ENCODE measurements at regions of chr22 and their contacts with region 1.

Region 1: DNA sequence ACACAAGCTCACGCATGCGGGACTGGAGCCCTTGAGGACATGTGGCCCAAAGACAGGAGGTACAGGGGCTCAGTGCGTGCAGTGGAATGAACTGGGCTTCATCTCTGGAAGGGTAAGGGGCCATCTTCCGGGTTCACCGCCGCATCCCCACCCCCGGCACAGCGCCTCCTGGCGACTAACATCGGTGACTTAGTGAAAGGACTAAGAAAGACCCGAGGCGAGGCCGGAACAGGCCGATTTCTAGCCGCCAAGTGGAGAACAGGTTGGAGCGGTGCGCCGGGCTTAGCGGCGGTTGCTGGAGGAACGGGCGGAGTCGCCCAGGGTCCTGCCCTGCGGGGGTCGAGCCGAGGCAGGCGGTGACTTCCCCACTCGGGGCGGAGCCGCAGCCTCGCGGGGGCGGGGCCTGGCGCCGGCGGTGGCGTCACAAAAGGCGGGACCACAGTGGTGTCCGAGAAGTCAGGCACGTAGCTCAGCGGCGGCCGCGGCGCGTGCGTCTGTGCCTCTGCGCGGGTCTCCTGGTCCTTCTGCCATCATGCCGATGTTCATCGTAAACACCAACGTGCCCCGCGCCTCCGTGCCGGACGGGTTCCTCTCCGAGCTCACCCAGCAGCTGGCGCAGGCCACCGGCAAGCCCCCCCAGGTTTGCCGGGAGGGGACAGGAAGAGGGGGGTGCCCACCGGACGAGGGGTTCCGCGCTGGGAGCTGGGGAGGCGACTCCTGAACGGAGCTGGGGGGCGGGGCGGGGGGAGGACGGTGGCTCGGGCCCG is at the start of gene MIF:
- DNase-seq: peak; percentile 96
- ATAC-seq: peak; percentile 91
- H3K4me3 Mint-ChIP-seq: peak within 1 kb of the TSS; percentile 94
- H3K27ac Mint-ChIP-seq: peak within 1 kb of the TSS; percentile 99
- H3K4me1 Mint-ChIP-seq: peaks cover 21% of the 10 kb centered on the region
- H3K27me3 Mint-ChIP-seq: no peaks in the 10 kb centered on the region
- CTCF ChIP-seq: peak; percentile 85
- total RNA-seq, gene MIF: 1,485 to 1,525 TPM

Region 2: DNA sequence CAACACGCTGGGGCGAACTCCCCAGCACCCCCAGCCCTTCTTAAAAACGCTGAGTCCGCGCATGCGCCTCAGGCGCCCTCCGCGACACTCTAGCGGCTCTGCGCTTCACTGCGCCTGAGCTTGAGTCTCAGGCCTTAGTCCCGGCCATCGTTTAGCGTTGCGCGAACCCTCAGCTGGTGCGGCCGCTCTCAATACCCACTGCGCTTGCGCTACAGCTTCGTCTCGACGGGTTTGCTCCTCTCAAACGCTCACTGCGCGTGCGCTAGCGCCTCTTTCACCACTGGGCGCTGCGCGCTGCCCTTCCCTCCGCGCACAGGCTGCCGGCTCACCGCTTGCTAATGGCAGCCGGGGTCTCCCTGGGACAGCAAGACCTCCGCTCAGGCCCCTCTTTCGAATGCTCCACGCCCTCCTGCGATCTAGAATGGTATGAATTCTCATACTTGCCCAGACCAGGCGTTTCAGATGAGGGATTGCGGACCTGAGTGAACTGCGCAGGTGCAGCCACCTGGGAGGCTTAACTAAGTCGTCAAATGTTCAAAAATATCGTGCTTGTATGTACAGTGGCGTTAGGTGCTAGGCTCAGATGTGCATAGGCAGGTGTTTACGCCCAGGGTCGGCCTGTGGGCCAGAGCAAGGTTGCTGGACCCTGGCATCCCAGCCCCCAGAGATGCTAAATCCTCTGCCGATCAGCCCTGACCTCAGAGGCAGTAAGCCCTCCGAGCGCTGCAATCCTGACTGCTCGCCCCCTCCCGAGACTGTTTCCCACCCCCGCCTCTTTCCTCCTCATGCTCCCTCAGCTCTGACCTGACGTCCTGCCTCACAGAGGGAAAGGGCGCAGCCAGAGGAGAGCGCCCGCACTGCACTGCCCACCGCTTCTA is 36.3 kb before region 1 on chr22 and contains the start of gene SLC2A11:
- CTCF ChIA-PET with region 1: interaction called, 28 read pairs
- POLR2A ChIA-PET with region 1: interaction called, 10 read pairs
- intact Hi-C with region 1: no loop called
- DNase-seq: peak; percentile 97
- ATAC-seq: peak; percentile 97
- H3K4me3 Mint-ChIP-seq: peak within 1 kb of the TSS; percentile 90
- H3K27ac Mint-ChIP-seq: peak within 1 kb of the TSS; percentile 75
- H3K4me1 Mint-ChIP-seq: peaks cover 11% of the 10 kb centered on the region
- H3K27me3 Mint-ChIP-seq: no peaks in the 10 kb centered on the region
- CTCF ChIP-seq: peak; percentile 25
- total RNA-seq, gene SLC2A11: 8.0 to 8.6 TPM

Region 3: DNA sequence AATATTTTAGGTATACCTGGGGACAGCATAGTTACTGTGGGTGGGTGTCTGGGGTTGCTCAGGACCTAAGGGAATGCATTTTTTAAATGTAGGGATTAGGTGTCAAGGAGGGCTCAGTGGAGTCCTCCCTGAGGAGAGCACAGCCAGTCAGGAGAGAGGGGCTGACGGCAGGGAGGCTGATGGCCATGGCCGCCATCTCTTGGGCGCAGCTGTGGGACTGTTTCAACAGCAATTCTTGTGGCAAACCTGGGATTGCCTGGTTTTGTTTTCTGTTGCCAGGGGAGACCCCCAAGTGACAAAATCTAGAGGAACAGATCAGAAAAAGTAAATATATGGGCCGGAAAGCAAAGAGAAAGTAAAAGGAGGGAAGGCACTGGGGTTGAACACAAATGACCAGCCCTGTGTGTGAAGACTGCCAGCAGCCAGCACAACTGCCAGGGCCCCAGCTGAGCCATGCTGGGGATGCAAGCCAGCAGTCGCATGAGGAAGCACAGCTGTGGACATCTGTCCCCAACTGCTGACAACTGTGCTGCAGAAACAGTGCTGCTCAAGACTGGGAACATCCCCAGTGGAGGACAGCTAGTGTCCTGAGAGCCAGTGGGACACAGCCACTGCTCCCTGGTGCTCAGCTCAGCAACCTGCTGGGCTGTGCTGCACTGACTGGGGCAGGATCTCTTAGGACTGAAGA is 10.6 kb after region 1 on chr22:
- CTCF ChIA-PET with region 1: interaction called, 8 read pairs
- POLR2A ChIA-PET with region 1: interaction called, 125 read pairs
- intact Hi-C with region 1: no loop called
- DNase-seq: no peak
- ATAC-seq: no peak
- H3K4me3 Mint-ChIP-seq: no peak overlapping the region
- H3K27ac Mint-ChIP-seq: no peak overlapping the region
- H3K4me1 Mint-ChIP-seq: no peaks in the 10 kb centered on the region
- H3K27me3 Mint-ChIP-seq: no peaks in the 10 kb centered on the region
- CTCF ChIP-seq: no peak

Region 4: GRCh38 chr22:23913661-23914353 is 19.7 kb after region 1 on chr22:
- CTCF ChIA-PET with region 1: interaction called, 19 read pairs
- POLR2A ChIA-PET with region 1: interaction called, 125 read pairs
- intact Hi-C with region 1: no loop called
- DNase-seq: peak; percentile 100
- ATAC-seq: peak; percentile 99
- H3K4me3 Mint-ChIP-seq: peak overlapping the region; percentile 93
- H3K27ac Mint-ChIP-seq: peak overlapping the region; percentile 99
- H3K4me1 Mint-ChIP-seq: peaks cover 34% of the 10 kb centered on the region
- H3K27me3 Mint-ChIP-seq: no peaks in the 10 kb centered on the region
- CTCF ChIP-seq: no peak

Region 5: GRCh38 chr22:24156913-24157821 is 263.0 kb after region 1 on chr22:
- CTCF ChIA-PET with region 1: interaction called, 3 read pairs
- POLR2A ChIA-PET with region 1: interaction called, 10 read pairs
- intact Hi-C with region 1: no loop called
- DNase-seq: peak; percentile 94
- ATAC-seq: peak; percentile 72
- H3K4me3 Mint-ChIP-seq: peak overlapping the region; percentile 74
- H3K27ac Mint-ChIP-seq: peak overlapping the region; percentile 84
- H3K4me1 Mint-ChIP-seq: peaks cover 88% of the 10 kb centered on the region
- H3K27me3 Mint-ChIP-seq: no peaks in the 10 kb centered on the region
- CTCF ChIP-seq: peak; percentile 87

Measured in activated CD8-positive, alpha-beta T cell treated with anti-CD3 and anti-CD28 coated beads for 36 hours (primary cell).